ENCODE measurements at regions of chr5 and their contacts with region 1.

Region 1: DNA sequence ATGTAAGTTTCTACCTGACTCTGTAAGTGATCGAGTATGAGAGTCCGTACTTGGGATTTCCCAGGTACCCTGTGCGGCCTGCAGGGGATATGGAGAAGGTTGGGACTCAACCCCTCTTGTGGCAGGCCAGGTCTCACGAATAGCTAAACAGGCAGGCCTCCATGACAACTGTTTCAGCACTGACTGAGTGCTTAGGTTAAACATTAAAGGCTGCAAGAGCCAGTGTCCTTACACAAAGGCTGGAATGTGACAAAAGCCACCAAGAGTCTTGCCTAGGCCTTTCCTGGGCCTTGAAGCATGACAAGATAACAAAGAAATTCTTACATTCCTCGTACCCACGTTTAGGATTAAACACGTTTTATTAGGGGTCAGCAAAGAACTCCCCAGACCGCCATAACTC is 58.6 kb downstream of the THBS4 start:
- DNase-seq: no peak
- ATAC-seq: no peak
- H3K4me3 ChIP-seq: no peak overlapping the region
- H3K27ac ChIP-seq: no peak overlapping the region
- H3K4me1 ChIP-seq: no peaks in the 10 kb centered on the region
- H3K27me3 ChIP-seq: no peaks in the 10 kb centered on the region
- CTCF ChIP-seq: no peak
- POLR2A ChIP-seq: no peak

Region 2: GRCh38 chr5:80275347-80275746 is 181.6 kb after region 1 on chr5:
- in situ Hi-C with region 1: loop called in 2 of 4 experiments (anchors 10 kb)
- intact Hi-C with region 1: loop called (anchors 1 kb)
- DNase-seq: no peak
- ATAC-seq: no peak
- H3K4me3 ChIP-seq: no peak overlapping the region
- H3K27ac ChIP-seq: no peak overlapping the region
- H3K4me1 ChIP-seq: no peaks in the 10 kb centered on the region
- H3K27me3 ChIP-seq: no peaks in the 10 kb centered on the region
- CTCF ChIP-seq: peak in 3 of 5 experiments; percentile 34 to 43 (median 35)
- POLR2A ChIP-seq: no peak

Region 3: GRCh38 chr5:80308526-80308925 is 214.7 kb after region 1 on chr5:
- in situ Hi-C with region 1: loop called (anchors 5 to 10 kb)
- intact Hi-C with region 1: loop called (anchors 2 kb)
- DNase-seq: no peak
- ATAC-seq: no peak
- H3K4me3 ChIP-seq: no peak overlapping the region
- H3K27ac ChIP-seq: no peak overlapping the region
- H3K4me1 ChIP-seq: no peaks in the 10 kb centered on the region
- H3K27me3 ChIP-seq: no peaks in the 10 kb centered on the region
- CTCF ChIP-seq: no peak
- POLR2A ChIP-seq: no peak

Region 4: GRCh38 chr5:80318212-80318611 is 224.4 kb after region 1 on chr5:
- in situ Hi-C with region 1: loop called in 1 of 4 experiments (anchors 10 kb)
- intact Hi-C with region 1: no loop called
- DNase-seq: no peak
- ATAC-seq: no peak
- H3K4me3 ChIP-seq: no peak overlapping the region
- H3K27ac ChIP-seq: no peak overlapping the region
- H3K4me1 ChIP-seq: no peaks in the 10 kb centered on the region
- H3K27me3 ChIP-seq: no peaks in the 10 kb centered on the region
- CTCF ChIP-seq: no peak
- POLR2A ChIP-seq: no peak